ENCODE measurements at regions of chr11 and their contacts with region 1.

Region 1: DNA sequence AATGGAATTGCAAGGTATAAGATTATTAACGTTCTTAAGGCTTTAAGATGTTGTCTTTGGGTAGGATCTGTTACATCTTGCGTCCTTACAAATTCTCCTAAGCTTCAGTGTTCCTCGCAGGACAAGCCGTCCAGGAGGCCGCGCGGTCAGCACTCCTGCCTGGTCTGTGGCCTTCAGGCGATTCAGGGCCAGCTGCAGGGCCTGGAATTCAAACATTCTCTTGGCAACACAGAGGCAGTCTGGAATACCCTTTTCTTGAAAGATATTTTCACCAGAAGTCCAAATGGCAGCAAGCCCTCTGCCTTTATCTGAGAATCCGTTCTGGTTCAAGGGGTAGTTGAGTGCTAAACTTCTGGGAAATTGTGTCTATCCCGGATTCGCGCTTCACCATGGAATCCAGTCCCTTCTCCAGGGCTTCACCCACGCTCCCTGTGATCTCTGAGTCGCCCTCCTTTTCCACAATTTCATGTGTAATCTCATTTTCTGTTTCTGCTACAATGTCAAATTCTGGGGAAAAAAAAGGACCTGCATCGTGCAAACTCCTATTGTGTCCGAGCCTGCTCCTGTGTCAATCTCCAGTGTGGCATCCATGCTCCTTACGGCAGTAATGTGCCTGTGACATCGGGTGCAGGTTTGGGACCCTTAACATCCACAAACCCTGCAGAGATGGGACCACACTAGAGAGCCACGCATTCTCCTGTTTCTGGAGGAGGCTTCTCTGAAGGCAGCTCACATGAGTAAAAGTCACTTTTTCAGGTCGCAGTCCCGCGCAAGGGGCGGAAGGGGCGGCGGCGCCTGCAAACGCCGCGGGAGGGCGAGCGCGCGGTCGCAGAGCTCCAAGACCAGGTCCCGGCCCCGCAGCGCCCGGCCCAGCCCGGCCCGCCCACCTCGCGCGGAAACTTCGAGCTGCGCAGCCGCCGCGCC is 25.4 kb upstream of the SORL1 start:
- DNase-seq: no peak
- H3K4me3 ChIP-seq: peak overlapping the region in 2 of 3 experiments; percentile 1 to 14
- H3K27ac ChIP-seq: no peak overlapping the region
- H3K4me1 ChIP-seq: no peaks in the 10 kb centered on the region
- H3K27me3 ChIP-seq: peaks cover 5% of the 10 kb centered on the region
- CTCF ChIP-seq: no peak

Region 2: GRCh38 chr11:121250843-121251242 is 175.9 kb before region 1 on chr11:
- CTCF ChIA-PET with region 1: no interaction called
- dilution Hi-C with region 1: no loop called
- in situ Hi-C with region 1: no loop called
- intact Hi-C with region 1: no loop called
- DNase-seq: peak; percentile 62
- H3K4me3 ChIP-seq: no peak overlapping the region
- H3K27ac ChIP-seq: no peak overlapping the region
- H3K4me1 ChIP-seq: peaks cover 11% of the 10 kb centered on the region
- H3K27me3 ChIP-seq: no peaks in the 10 kb centered on the region
- CTCF ChIP-seq: no peak

Region 3: DNA sequence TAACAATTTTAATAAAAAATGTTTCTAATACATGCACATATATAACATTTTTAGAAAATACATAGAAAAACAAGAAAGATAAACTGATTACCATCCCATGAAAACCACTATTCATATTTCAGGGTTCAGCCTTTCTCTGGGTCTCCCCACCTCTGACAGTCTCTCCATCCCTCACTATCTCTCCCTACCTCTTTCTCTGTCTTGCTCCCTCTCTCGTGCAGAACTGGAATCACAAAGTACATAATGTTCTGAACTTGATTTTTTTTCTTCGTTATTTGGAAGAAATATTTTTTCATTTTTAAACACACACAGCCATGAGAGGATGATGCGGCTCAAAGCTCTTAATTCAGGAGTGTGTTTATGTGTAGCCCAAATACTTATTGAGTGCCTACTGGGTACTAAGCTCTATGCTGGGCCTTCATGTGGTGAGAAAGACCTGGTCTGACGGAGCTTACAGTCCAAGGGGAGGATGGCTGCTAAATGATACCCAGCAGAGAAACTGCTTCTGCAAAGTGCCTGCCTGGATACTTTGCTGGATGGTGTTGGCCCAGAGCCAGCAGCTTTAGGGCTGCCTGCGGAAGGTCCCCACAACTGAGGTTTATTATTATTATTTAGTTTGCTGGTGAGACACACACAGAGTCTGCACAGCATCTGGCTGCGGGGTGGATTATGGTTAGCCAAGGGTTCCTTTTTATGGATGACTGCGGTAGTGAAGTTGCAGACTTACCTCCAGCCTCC is 91.6 kb before region 1 on chr11:
- CTCF ChIA-PET with region 1: no interaction called
- dilution Hi-C with region 1: no loop called
- in situ Hi-C with region 1: no loop called
- intact Hi-C with region 1: loop called (anchors 5 kb)
- DNase-seq: no peak
- H3K4me3 ChIP-seq: no peak overlapping the region
- H3K27ac ChIP-seq: no peak overlapping the region
- H3K4me1 ChIP-seq: no peaks in the 10 kb centered on the region
- H3K27me3 ChIP-seq: no peaks in the 10 kb centered on the region
- CTCF ChIP-seq: peak in 1 of 2 donors; percentile 23